ENCODE measurements at regions of chr22 and their contacts with region 1.

Region 1: GRCh38 chr22:35430897-35431322 is 31.0 kb downstream of the MCM5 start:
- DNase-seq: peak; percentile 84
- H3K4me3 ChIP-seq: no peak overlapping the region
- H3K27ac ChIP-seq: no peak overlapping the region
- H3K4me1 ChIP-seq: no peaks in the 10 kb centered on the region
- H3K27me3 ChIP-seq: no peaks in the 10 kb centered on the region
- CTCF ChIP-seq: peak; percentile 96

Region 2: GRCh38 chr22:35330258-35330861 is 100.5 kb before region 1 on chr22:
- CTCF ChIA-PET with region 1: no interaction called
- POLR2A ChIA-PET with region 1: interaction called, 12 read pairs
- intact Hi-C with region 1: no loop called
- DNase-seq: peak; percentile 73
- H3K4me3 ChIP-seq: no peak overlapping the region
- H3K27ac ChIP-seq: peak overlapping the region; percentile 53
- H3K4me1 ChIP-seq: peaks cover 6% of the 10 kb centered on the region
- H3K27me3 ChIP-seq: no peaks in the 10 kb centered on the region
- CTCF ChIP-seq: no peak

Region 3: GRCh38 chr22:35418731-35419130 is 12.2 kb before region 1 on chr22:
- CTCF ChIA-PET with region 1: interaction called, 3 read pairs
- POLR2A ChIA-PET with region 1: interaction called, 15 read pairs
- intact Hi-C with region 1: no loop called
- DNase-seq: no peak
- H3K4me3 ChIP-seq: no peak overlapping the region
- H3K27ac ChIP-seq: no peak overlapping the region
- H3K4me1 ChIP-seq: no peaks in the 10 kb centered on the region
- H3K27me3 ChIP-seq: no peaks in the 10 kb centered on the region
- CTCF ChIP-seq: no peak

Region 4: DNA sequence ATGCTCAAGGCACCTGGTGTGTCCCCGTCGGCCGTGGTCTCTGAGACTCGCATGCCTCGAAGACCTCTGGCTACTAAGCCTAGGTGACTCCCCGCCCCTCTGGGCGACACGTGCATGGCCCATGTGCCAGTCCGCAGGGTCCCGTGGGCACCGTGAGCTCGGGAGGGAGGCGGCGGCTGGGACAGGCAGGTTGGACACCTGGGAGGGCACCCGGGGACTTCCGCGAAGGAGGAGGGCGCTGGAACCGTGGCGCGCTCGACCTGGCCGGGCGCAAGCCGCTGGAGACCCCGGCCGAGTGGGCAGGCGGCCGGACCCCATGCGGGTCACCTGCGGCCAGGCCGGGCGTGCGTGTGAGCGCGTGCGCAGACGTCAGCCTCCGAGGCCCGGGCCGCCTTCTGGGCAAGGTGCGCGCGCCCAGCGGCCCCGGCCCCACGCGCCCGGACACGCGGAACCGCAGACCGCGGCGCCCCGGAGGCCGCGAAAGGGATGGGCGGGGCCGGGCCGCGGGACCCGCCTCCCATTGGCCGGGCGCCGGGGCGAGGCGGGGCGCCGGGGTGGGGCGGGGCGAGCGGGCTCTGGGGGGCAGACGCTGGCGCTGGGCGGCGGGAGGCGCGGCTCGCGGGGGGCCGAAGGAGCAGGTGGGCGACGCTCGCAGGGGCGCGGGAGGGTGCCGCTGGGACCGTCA is 109.1 kb after region 1 on chr22:
- CTCF ChIA-PET with region 1: no interaction called
- POLR2A ChIA-PET with region 1: no interaction called
- intact Hi-C with region 1: no loop called
- DNase-seq: peak; percentile 63
- H3K4me3 ChIP-seq: peak overlapping the region; percentile 54
- H3K27ac ChIP-seq: peak overlapping the region; percentile 21
- H3K4me1 ChIP-seq: peaks cover 45% of the 10 kb centered on the region
- H3K27me3 ChIP-seq: no peaks in the 10 kb centered on the region
- CTCF ChIP-seq: no peak

Region 5: DNA sequence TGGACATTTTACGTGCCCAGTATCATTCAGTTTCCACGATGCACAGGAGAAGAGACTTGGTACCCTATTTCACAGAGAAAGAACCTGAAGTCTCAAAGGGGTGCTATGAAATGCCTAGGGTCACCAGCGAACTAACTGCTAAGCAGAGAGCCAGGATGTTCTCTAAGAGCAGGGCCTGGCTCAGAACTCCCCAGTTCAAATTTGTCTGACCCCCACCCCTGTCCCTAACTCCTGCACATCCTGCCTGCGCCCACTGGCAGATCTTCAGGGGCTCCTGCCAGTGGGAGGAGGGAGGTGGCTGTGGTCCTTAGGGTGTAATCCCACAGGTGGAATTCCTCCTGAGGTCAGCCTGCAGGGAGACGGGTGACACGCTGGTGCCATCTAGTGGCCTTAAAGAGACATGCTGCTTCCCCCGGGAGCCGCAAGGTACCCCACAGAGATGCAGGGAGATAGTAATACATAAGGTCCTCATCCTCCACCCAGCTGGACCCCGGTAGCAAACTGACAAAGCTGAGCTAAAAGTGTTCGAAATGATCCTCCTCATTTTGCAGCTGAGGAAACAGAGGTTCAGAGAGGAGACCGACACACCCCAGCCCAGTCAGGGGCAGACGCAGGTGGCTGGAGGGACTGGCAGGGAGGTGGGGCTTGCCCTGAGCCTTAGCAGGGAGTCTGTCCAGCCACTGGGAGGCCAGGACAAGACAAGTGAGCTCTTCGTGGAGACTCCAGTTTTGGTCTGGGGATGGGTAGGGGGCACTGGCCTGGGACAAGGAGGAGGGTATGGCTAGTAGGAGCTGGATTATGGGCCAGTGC is 152.2 kb after region 1 on chr22:
- CTCF ChIA-PET with region 1: interaction called, 11 read pairs
- POLR2A ChIA-PET with region 1: no interaction called
- intact Hi-C with region 1: loop called (anchors 1 kb)
- DNase-seq: peak; percentile 72
- H3K4me3 ChIP-seq: no peak overlapping the region
- H3K27ac ChIP-seq: no peak overlapping the region
- H3K4me1 ChIP-seq: no peaks in the 10 kb centered on the region
- H3K27me3 ChIP-seq: no peaks in the 10 kb centered on the region
- CTCF ChIP-seq: peak; percentile 93

Region 6: GRCh38 chr22:35622191-35622913 is 191.4 kb after region 1 on chr22:
- CTCF ChIA-PET with region 1: no interaction called
- POLR2A ChIA-PET with region 1: no interaction called
- intact Hi-C with region 1: loop called (anchors 2 kb)
- DNase-seq: peak; percentile 14
- H3K4me3 ChIP-seq: no peak overlapping the region
- H3K27ac ChIP-seq: no peak overlapping the region
- H3K4me1 ChIP-seq: peaks cover 15% of the 10 kb centered on the region
- H3K27me3 ChIP-seq: no peaks in the 10 kb centered on the region
- CTCF ChIP-seq: no peak

Measured in A673 (cell line).